Activated B cell treated with CpG ODN at 0.5 μM for 24 hours (primary cell): ENCODE measurements at regions of chr18 and their contacts with region 1.

Region 1: DNA sequence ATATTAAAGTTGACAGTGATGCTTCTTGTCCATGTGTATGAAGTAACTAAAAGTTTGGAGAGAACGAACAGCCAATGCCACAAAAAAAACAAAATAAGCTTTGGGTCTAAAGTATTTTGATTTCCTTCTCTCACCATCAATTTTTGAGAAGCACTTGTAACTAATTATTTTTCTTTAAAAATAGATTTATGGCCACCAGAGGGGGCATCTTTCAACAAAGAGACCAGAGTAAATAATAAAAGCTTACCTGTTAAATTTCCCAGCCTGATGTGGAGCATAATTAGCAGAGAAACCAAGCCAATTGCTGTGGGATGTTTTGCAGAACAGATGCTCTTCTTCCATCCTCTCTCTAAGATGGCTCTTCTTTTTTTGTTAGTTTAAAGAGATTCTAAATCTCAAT is 29.0 kb downstream of the LINC00305 start:
- DNase-seq: no peak
- ATAC-seq: no peak
- H3K4me3 Mint-ChIP-seq: no peak overlapping the region
- H3K27ac Mint-ChIP-seq: no peak overlapping the region
- H3K4me1 Mint-ChIP-seq: no peaks in the 10 kb centered on the region
- H3K27me3 Mint-ChIP-seq: no peaks in the 10 kb centered on the region
- CTCF ChIP-seq: no peak

Region 2: GRCh38 chr18:63979409-63979920 is 140.5 kb before region 1 on chr18:
- CTCF ChIA-PET with region 1: no interaction called
- POLR2A ChIA-PET with region 1: no interaction called
- intact Hi-C with region 1: no loop called
- DNase-seq: no peak
- ATAC-seq: peak; percentile 72
- H3K4me3 Mint-ChIP-seq: no peak overlapping the region
- H3K27ac Mint-ChIP-seq: peak overlapping the region; percentile 16
- H3K4me1 Mint-ChIP-seq: peaks cover 27% of the 10 kb centered on the region
- H3K27me3 Mint-ChIP-seq: no peaks in the 10 kb centered on the region
- CTCF ChIP-seq: peak; percentile 89

Region 3: GRCh38 chr18:64208516-64208915 is 88.6 kb after region 1 on chr18:
- CTCF ChIA-PET with region 1: no interaction called
- POLR2A ChIA-PET with region 1: no interaction called
- intact Hi-C with region 1: no loop called
- DNase-seq: no peak
- ATAC-seq: no peak
- H3K4me3 Mint-ChIP-seq: no peak overlapping the region
- H3K27ac Mint-ChIP-seq: no peak overlapping the region
- H3K4me1 Mint-ChIP-seq: peaks cover 7% of the 10 kb centered on the region
- H3K27me3 Mint-ChIP-seq: no peaks in the 10 kb centered on the region
- CTCF ChIP-seq: no peak

Region 4: DNA sequence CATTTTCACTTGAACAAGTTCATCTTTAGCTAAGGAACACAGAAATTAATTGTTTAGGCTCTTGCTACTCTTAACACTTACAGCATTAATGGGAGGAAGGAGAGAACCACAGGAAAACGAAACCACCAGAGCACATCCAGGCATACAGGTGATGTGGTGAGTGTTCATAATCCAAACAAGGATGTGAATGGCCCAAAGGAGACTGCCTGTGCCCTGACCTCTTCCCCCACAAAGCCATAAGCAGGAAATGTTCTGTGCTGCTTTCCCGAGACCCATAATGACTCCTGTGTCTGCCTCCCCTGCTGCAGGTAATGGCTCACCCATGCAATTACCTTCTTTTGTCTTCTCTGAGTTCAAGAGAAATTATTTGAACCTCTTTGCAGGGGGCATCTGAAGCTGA is 324.9 kb after region 1 on chr18:
- CTCF ChIA-PET with region 1: no interaction called
- POLR2A ChIA-PET with region 1: no interaction called
- intact Hi-C with region 1: no loop called
- DNase-seq: no peak
- ATAC-seq: no peak
- H3K4me3 Mint-ChIP-seq: no peak overlapping the region
- H3K27ac Mint-ChIP-seq: no peak overlapping the region
- H3K4me1 Mint-ChIP-seq: no peaks in the 10 kb centered on the region
- H3K27me3 Mint-ChIP-seq: no peaks in the 10 kb centered on the region
- CTCF ChIP-seq: no peak

Region 5: DNA sequence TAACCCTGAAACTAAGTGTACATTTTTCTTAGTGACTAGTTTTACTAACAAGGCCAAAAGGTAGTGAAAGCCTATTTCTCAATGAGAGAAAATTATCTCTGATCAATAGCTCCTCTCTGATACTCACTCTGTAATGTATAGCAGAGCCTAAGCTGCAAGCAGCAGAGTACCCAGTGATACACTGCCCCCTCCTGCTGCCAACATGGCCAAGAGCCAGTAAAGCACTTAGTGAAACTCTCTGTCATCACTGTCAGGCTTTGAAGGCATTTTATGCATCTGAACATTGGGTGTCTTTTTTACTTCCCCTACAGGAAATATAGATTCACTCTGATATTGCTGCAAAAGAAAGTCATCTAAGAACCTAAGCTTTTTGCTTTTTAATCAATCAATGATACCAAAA is 846.8 kb after region 1 on chr18:
- CTCF ChIA-PET with region 1: no interaction called
- POLR2A ChIA-PET with region 1: no interaction called
- intact Hi-C with region 1: loop called (anchors 10 kb)
- DNase-seq: no peak
- ATAC-seq: no peak
- H3K4me3 Mint-ChIP-seq: no peak overlapping the region
- H3K27ac Mint-ChIP-seq: no peak overlapping the region
- H3K4me1 Mint-ChIP-seq: no peaks in the 10 kb centered on the region
- H3K27me3 Mint-ChIP-seq: no peaks in the 10 kb centered on the region
- CTCF ChIP-seq: no peak